ENCODE measurements at regions of chr11 and their contacts with region 1.

Region 1: DNA sequence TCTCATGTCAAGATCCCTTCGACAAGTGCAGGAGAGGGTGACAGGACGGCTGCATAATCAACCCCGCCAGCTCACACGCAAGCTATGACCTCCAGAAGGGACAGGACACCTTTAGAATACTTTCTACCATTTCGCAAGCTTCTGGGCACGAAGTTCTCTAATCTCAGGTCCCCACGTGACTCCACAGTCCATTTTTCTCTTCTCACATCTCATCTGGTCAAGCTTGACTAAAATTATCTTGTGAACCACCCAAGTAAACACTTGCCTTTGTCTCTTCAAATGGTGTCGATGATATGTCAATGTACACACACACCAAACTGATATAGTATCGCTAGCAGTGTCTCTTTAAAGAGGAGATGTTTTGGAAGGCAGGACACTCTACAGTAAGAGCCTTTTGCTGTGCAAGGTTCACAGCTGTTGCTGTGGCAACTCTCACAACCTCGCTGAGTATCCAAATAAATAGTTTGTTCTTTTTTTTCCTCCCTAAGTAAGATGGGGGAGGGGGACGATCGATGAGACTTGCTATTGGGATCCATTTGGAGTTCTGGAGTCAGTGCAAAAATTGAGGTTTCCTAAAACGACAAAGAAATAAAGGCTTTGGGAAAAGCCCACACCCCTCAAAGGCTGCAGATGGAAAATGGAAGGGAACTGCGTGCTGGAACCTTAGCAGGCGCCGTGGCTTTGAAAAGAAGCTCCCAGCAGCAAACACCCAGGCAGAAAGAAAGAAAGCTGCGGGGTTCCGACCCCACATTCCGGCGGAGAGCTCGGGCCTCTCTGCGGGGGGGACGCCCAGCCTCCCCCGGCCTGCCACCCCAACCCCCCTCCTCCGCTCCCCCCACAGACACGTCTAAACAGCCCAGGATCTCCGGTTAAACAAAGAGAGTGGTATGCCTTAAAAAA is 215.4 kb upstream of the UBASH3B start:
- DNase-seq: peak in 4 of 10 donors; percentile 21 to 47 (median 23)
- H3K4me3 ChIP-seq: peak overlapping the region; percentile 44 to 82 (median 63)
- H3K27ac ChIP-seq: peak overlapping the region; percentile 30 to 97 (median 89)
- H3K27me3 ChIP-seq: no peaks in the 10 kb centered on the region
- CTCF ChIP-seq: peak in 1 of 56 donors; percentile 7

Region 2: DNA sequence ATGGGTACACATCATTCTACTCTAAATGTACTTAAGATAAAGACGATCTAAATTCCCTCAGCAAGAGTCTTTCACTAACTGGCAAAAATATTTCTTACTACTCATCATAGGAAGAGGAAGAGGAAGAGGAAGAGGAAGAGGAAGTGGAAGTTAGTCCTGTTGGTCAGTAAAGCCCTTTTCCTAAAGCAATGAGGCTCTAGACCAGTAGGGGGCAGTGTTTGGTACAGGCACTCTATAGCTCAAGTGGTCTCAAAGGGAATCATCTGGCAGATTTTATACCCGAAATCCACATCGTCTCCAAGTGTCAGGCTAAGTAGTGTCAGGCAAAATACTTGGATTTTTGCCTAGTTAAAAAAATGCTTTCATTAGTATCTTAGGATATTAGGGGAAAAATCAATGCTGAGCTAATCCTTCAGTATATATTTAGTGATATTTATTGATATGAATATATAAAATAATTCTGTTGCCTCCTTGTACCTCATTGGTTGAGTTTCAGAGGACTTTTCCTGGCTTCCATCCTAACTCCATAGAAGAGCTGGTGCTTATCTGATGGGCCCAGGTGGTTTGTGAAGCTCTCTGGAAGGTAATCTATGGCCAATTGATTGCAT is 331.9 kb before region 1 on chr11:
- intact Hi-C with region 1: loop called in 1 of 2 experiments (anchors 5 kb)
- DNase-seq: peak in 1 of 10 donors; percentile 65
- H3K4me3 ChIP-seq: no peak overlapping the region
- H3K27ac ChIP-seq: peak overlapping the region in 11 of 59 donors; percentile 2 to 47 (median 22)
- H3K27me3 ChIP-seq: no peaks in the 10 kb centered on the region
- CTCF ChIP-seq: peak; percentile 44 to 89 (median 76)

Region 3: GRCh38 chr11:122215244-122215992 is 224.7 kb before region 1 on chr11:
- intact Hi-C with region 1: loop called in 1 of 2 experiments (anchors 5 kb)
- DNase-seq: peak; percentile 32 to 87 (median 76)
- H3K4me3 ChIP-seq: no peak overlapping the region
- H3K27ac ChIP-seq: peak overlapping the region; percentile 21 to 99 (median 96)
- H3K27me3 ChIP-seq: no peaks in the 10 kb centered on the region
- CTCF ChIP-seq: peak; percentile 44 to 97 (median 89)

Region 4: GRCh38 chr11:122517403-122518379 is 77.5 kb after region 1 on chr11:
- intact Hi-C with region 1: no loop called
- DNase-seq: no peak
- H3K4me3 ChIP-seq: no peak overlapping the region
- H3K27ac ChIP-seq: no peak overlapping the region
- H3K27me3 ChIP-seq: no peaks in the 10 kb centered on the region
- CTCF ChIP-seq: no peak

Measured in dorsolateral prefrontal cortex (tissue), 120 donors.